Heart right ventricle (tissue), 16 donors: ENCODE measurements at regions of chr20 and their contacts with region 1.

Region 1: GRCh38 chr20:5448449-5449118 is 131.8 kb upstream of the PROKR2 start:
- DNase-seq: peak in 1 of 2 donors; percentile 39
- ATAC-seq: peak in 1 of 8 donors; percentile 45
- H3K4me3 ChIP-seq: no peak overlapping the region
- H3K27ac ChIP-seq: no peak overlapping the region
- H3K4me1 ChIP-seq: no peaks in the 10 kb centered on the region
- H3K27me3 ChIP-seq: peaks cover 0 to 24% (median 14%) of the 10 kb centered on the region in 7 donors
- CTCF ChIP-seq: peak; percentile 34 to 77 (median 66)

Region 2: GRCh38 chr20:5119435-5120188 is 329.0 kb before region 1 on chr20 and contains the start of gene PCNA:
- intact Hi-C with region 1: loop called in 4 of 10 experiments (anchors 5 to 10 kb)
- DNase-seq: peak; percentile 96 to 97
- ATAC-seq: peak; percentile 99 to 100 (median 100)
- H3K4me3 ChIP-seq: peak within 1 kb of the TSS; percentile 48 to 92 (median 74)
- H3K27ac ChIP-seq: peak within 1 kb of the TSS; percentile 69 to 90 (median 80)
- H3K4me1 ChIP-seq: peaks cover 5 to 41% (median 21%) of the 10 kb centered on the region in 9 donors
- H3K27me3 ChIP-seq: no peaks in the 10 kb centered on the region
- CTCF ChIP-seq: peak in 5 of 9 donors; percentile 12 to 47 (median 27)
- total RNA-seq, gene PCNA: 17.9 to 37.3 (median 21.4) TPM

Region 3: GRCh38 chr20:5126512-5127203 is 321.9 kb before region 1 on chr20 and contains the start of gene CDS2:
- intact Hi-C with region 1: loop called in 4 of 10 experiments (anchors 5 to 10 kb)
- DNase-seq: peak; percentile 100
- ATAC-seq: peak; percentile 97 to 99 (median 97)
- H3K4me3 ChIP-seq: peak within 1 kb of the TSS; percentile 83 to 98 (median 94)
- H3K27ac ChIP-seq: peak within 1 kb of the TSS; percentile 89 to 99 (median 98)
- H3K4me1 ChIP-seq: peaks cover 7 to 60% (median 48%) of the 10 kb centered on the region in 9 donors
- H3K27me3 ChIP-seq: no peaks in the 10 kb centered on the region
- CTCF ChIP-seq: peak; percentile 54 to 90 (median 71)
- total RNA-seq, gene CDS2: 67.5 to 100 (median 85.7) TPM

Region 4: GRCh38 chr20:5205348-5206210 is 243.0 kb before region 1 on chr20:
- intact Hi-C with region 1: loop called in 9 of 10 experiments (anchors 1 to 10 kb)
- DNase-seq: peak; percentile 60 to 67
- ATAC-seq: peak; percentile 85 to 91 (median 90)
- H3K4me3 ChIP-seq: no peak overlapping the region
- H3K27ac ChIP-seq: no peak overlapping the region
- H3K4me1 ChIP-seq: peaks cover 0 to 19% (median 4%) of the 10 kb centered on the region in 9 donors
- H3K27me3 ChIP-seq: no peaks in the 10 kb centered on the region
- CTCF ChIP-seq: peak; percentile 57 to 90 (median 89)

Region 5: DNA sequence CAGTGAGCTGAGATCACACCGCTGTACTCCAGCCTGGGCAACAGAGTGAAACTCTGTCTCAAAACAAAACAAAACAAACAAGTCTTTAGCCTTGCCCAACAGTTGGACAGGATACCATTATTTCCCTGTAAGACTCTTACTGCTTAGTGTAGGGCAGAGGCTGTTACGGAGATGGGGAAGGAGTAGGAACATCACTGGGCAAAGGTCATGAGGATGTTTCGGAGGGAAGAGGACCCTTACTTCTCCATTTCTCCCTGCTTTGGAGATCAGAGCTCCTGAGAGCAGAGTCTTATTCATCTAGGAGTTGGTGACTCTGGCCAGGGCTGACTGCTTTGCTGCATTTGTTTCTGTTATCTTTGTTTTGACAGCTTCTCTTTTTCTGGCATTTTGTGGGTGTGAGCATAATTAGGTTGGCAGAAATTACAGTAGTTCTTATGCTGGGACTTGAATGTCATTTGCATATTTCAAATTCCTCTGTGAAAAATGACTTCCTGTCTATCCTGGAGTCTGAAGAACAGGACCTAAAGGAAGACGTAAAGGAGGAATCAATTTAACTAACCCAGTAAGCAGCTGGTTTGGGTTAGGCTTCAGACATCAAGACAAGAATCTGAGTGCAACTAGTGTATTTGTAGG is 232.8 kb before region 1 on chr20:
- intact Hi-C with region 1: loop called in 2 of 10 experiments (anchors 10 kb)
- DNase-seq: no peak
- ATAC-seq: no peak
- H3K4me3 ChIP-seq: no peak overlapping the region
- H3K27ac ChIP-seq: peak overlapping the region in 2 of 10 donors; percentile 15 to 66
- H3K4me1 ChIP-seq: peaks cover 0 to 29% (median 13%) of the 10 kb centered on the region in 9 donors
- H3K27me3 ChIP-seq: no peaks in the 10 kb centered on the region
- CTCF ChIP-seq: no peak

Region 6: DNA sequence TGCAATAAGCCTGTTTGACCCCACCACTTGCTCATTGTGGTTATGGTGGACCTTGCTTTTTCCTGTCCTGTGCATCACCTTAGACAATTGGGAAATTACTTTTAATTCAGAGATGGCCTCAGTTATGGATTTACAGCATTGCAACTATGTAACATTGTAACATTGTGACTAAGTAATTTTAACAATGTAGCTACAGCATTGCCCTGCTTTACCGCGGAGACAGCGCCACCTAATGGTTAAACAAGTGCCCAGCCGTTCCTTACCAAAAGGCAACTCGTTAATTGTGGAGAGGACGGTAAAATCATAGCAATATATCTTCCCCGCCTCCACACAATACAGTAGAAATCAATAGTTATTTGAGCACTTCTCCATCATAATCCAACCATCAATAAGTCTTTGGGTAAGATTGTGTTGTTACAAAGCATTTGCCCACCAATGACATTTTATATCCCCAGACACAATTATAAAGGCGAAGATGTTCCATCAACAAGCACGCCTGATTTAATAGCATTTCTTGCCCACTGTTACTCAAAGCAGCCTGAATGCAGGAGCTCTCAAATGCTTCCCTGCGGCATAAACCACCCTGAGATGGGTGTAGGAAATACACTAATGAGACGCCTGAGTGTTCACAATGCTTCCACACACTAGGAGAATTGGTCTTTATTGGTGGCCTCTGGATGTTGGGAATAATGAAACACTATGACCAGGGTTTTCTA is 225.5 kb before region 1 on chr20:
- intact Hi-C with region 1: loop called in 2 of 10 experiments (anchors 10 kb)
- DNase-seq: peak; percentile 29 to 48
- ATAC-seq: peak in 7 of 8 donors; percentile 37 to 76 (median 69)
- H3K4me3 ChIP-seq: no peak overlapping the region
- H3K27ac ChIP-seq: no peak overlapping the region
- H3K4me1 ChIP-seq: peaks cover 0 to 6% (median 0%) of the 10 kb centered on the region in 9 donors
- H3K27me3 ChIP-seq: no peaks in the 10 kb centered on the region
- CTCF ChIP-seq: peak; percentile 72 to 94 (median 85)

Region 7: DNA sequence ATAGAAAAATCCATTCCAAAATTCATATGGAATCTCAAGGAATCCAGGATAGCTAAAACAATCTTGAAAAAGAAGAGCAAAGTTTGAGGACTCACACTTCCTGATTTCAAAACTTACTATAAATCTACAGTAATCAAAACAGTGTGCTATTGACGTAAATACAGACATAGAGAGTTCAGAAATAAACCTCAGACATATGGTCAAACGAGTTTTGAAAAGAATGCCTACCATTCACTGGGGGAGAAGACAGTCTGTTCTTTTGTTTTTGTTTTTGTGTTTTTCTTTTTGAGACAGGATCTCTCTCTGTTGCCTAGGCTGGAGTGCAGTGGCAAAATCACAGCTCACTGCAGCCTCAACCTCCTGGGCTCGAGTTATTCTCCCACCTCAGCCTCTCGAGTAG is 106.6 kb before region 1 on chr20:
- intact Hi-C with region 1: no loop called
- DNase-seq: no peak
- ATAC-seq: no peak
- H3K4me3 ChIP-seq: no peak overlapping the region
- H3K27ac ChIP-seq: no peak overlapping the region
- H3K4me1 ChIP-seq: no peaks in the 10 kb centered on the region
- H3K27me3 ChIP-seq: peaks cover 0 to 3% (median 0%) of the 10 kb centered on the region in 7 donors
- CTCF ChIP-seq: no peak

Region 8: DNA sequence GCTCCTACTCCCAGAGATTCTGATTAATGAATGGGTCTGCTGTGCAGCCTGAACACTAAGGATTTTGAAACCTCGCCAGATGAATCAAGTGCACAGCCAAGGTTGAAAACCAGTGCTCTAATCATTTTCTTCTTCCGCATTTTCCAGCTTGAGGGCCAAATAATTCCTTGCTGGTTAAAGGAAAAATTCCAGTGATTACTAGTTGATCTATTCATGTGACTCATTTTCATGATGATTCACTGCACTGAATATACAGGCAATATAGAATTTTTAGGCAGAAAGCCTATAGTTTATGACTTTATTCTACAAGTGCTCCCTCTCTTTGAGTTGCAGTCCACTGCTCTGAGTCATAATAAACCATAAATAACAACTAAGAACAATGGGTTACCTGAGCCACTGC is 51.2 kb before region 1 on chr20:
- intact Hi-C with region 1: no loop called
- DNase-seq: no peak
- ATAC-seq: no peak
- H3K4me3 ChIP-seq: no peak overlapping the region
- H3K27ac ChIP-seq: no peak overlapping the region
- H3K4me1 ChIP-seq: no peaks in the 10 kb centered on the region
- H3K27me3 ChIP-seq: peaks cover 0 to 6% (median 0%) of the 10 kb centered on the region in 7 donors
- CTCF ChIP-seq: no peak